BJ (cell line): ENCODE measurements at regions of chr17 and their contacts with region 1.

Region 1: GRCh38 chr17:80871341-80871740 is 120.3 kb upstream of the CHMP6 start:
- DNase-seq: no peak
- H3K4me3 ChIP-seq: no peak overlapping the region
- H3K27me3 ChIP-seq: no peaks in the 10 kb centered on the region
- CTCF ChIP-seq: no peak

Region 2: DNA sequence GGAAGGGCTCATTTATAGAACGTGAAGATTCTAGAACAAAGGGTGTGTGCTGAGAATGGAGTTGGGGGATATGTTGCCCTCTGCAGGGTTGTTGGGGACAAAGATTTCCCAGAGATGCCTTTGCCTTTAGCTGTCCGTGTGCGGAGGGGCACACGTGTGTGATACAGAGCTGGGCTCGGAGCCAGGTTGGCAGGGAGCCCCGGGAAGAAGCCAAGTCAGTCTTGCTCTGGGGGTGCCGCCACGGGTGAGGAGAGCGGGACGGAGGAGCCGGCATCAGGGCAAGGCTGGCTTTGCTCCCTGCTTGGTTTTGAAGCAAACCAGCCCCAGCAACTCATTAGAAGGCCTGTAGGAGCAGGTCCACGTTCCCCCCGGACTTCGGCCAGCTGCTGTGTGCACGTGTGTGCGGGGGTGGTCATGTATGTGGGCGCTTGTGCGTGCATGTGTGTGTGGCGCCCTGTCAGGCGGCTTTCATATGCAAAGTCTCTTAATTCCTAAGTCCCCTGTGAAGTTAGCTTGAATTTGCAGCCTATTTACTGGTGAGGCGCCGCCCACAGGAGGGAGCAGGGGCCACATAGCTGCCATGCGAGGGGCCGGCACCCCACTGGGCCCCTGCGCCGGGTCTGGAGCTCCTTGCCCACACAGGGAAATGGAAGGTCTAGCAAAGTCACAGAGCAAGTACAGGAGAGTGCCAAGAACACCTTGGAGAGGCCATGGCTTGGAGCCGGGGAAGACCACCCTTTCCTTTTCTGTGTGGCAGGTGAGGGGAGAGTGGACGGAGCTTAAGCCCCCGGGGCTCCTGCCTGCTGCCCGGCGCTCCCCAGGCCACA is 11.8 kb before region 1 on chr17:
- CTCF ChIA-PET with region 1: interaction called, 10 read pairs
- POLR2A ChIA-PET with region 1: no interaction called
- DNase-seq: peak; percentile 60
- H3K4me3 ChIP-seq: no peak overlapping the region
- H3K27me3 ChIP-seq: no peaks in the 10 kb centered on the region
- CTCF ChIP-seq: peak; percentile 44

Region 3: DNA sequence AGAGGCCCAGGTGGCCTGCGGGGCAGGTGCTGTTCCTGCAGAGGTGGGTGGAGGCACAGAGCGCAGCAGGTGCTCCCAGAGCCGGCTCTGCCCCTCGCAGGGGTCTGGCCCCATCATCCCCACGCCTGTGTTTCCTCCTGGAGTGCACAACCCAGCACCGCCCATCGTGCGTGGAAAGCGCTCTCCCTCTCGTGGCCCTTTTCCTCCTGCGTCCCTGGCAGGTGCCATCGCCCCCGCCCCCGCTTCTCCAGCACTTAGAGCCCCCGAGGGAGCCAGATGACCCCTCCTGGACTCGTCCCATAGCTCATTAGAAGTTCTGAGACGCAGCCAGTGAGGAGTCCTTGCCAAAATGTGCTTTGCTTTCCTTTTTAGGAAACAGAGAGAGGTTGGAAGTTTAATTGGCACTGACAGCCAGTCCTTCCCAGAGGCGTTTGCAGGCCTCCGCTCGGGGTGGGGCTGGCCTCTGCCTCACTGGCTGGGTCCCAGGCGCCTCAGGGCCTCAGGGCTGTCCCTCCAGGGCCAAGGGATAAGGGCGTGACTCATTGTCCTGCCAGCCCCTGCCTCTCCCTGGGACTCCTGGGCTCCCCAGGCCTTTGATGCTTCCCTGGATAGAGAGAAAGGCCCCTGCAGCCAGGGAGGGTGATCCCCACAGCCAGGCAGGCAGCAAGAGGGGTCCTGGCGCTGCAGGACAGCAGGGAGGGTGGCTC is 88.1 kb after region 1 on chr17:
- CTCF ChIA-PET with region 1: no interaction called
- POLR2A ChIA-PET with region 1: interaction called, 19 read pairs
- DNase-seq: peak; percentile 41
- H3K4me3 ChIP-seq: no peak overlapping the region
- H3K27me3 ChIP-seq: no peaks in the 10 kb centered on the region
- CTCF ChIP-seq: no peak